SK-N-SH (cell line): ENCODE measurements at regions of chr1 and their contacts with region 1.

Region 1: GRCh38 chr1:31626223-31627207 is 9.0 kb downstream of the HCRTR1 start:
- DNase-seq: no peak
- H3K4me3 ChIP-seq: no peak overlapping the region; a peak in 1 of 4 replicates
- H3K27ac ChIP-seq: peak overlapping the region; percentile 37 to 99
- H3K4me1 ChIP-seq: peaks cover 5 to 58% of the 10 kb centered on the region in 2 experiments; a peak in 3 of 4 replicates
- H3K27me3 ChIP-seq: no peaks in the 10 kb centered on the region
- CTCF ChIP-seq: no peak
- EP300 ChIP-seq: no peak
- RAD21 ChIP-seq: no peak

Region 2: GRCh38 chr1:31639543-31639942 is 13.0 kb after region 1 on chr1:
- CTCF ChIA-PET with region 1: interaction called, 24 read pairs
- POLR2A ChIA-PET with region 1: interaction called, 13 read pairs
- DNase-seq: no peak
- H3K4me3 ChIP-seq: no peak overlapping the region
- H3K27ac ChIP-seq: peak overlapping the region; percentile 13 to 81; a peak in 3 of 4 replicates
- H3K4me1 ChIP-seq: peaks cover 14 to 35% of the 10 kb centered on the region in 2 experiments; a peak in 3 of 4 replicates
- H3K27me3 ChIP-seq: no peaks in the 10 kb centered on the region
- CTCF ChIP-seq: no peak
- EP300 ChIP-seq: no peak
- RAD21 ChIP-seq: no peak

Region 3: GRCh38 chr1:31644560-31645273 is 18.2 kb after region 1 on chr1 and contains the start of gene PEF1:
- CTCF ChIA-PET with region 1: interaction called, 24 read pairs
- POLR2A ChIA-PET with region 1: interaction called, 13 read pairs
- DNase-seq: peak; percentile 98
- H3K4me3 ChIP-seq: peak within 1 kb of the TSS; percentile 68 to 96
- H3K27ac ChIP-seq: peak within 1 kb of the TSS; percentile 92 to 99
- H3K4me1 ChIP-seq: peaks cover 9 to 21% of the 10 kb centered on the region in 2 experiments; a peak in 3 of 4 replicates
- H3K27me3 ChIP-seq: no peaks in the 10 kb centered on the region
- CTCF ChIP-seq: no peak
- EP300 ChIP-seq: no peak
- RAD21 ChIP-seq: no peak
- polyA plus RNA-seq, gene PEF1: 51.9 and 63.4 TPM in 2 replicates